ENCODE measurements at regions of chr10 and their contacts with region 1.

Region 1: GRCh38 chr10:5094265-5095205 is at the start of gene AKR1C3:
- DNase-seq: peak; percentile 22
- H3K4me3 Mint-ChIP-seq: peak within 1 kb of the TSS; percentile 78
- H3K27ac Mint-ChIP-seq: peak within 1 kb of the TSS; percentile 93
- H3K4me1 Mint-ChIP-seq: peaks cover 50% of the 10 kb centered on the region
- H3K27me3 Mint-ChIP-seq: no peaks in the 10 kb centered on the region
- CTCF ChIP-seq: peak; percentile 65
- total RNA-seq, gene AKR1C3: 177 and 181 TPM in 2 replicates

Region 2: DNA sequence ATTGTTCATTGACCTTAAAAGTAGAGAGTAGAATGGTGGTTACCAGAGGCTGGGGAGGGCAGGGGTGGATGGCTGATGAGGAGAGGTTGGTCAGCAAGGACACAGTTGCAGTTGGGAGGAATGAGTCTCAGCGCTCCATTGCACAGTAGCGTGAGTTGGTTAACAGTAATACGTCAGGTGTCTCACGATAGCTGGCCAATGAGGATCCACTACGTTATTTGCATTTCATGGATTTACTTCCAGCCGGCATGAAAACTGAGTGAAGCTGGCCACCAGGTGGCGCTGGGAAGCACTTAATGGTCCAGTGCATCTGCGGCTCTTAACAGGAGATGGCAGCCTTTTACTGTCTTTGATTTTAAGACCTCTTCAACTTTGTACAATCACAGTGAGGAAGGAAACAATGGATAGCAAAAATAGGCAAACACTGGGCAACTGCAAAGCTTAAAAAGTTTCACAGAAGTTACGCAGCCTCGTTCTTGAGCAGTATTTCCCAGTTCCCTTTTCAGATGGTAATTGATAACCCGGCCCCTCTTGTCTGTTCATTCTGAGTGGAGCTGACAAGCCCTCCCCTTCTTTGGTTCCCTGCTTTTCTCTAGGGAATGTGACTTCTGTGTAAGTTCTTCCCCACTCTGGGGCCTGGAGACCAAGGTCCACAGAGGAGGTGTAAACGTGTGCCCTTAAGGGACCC is 244.8 kb before region 1 on chr10:
- CTCF ChIA-PET with region 1: interaction called, 29 read pairs
- intact Hi-C with region 1: loop called (anchors 1 kb)
- DNase-seq: peak; percentile 94
- H3K4me3 Mint-ChIP-seq: no peak overlapping the region
- H3K27ac Mint-ChIP-seq: peak overlapping the region; percentile 72
- H3K4me1 Mint-ChIP-seq: peaks cover 61% of the 10 kb centered on the region
- H3K27me3 Mint-ChIP-seq: no peaks in the 10 kb centered on the region
- CTCF ChIP-seq: peak; percentile 98

Region 3: DNA sequence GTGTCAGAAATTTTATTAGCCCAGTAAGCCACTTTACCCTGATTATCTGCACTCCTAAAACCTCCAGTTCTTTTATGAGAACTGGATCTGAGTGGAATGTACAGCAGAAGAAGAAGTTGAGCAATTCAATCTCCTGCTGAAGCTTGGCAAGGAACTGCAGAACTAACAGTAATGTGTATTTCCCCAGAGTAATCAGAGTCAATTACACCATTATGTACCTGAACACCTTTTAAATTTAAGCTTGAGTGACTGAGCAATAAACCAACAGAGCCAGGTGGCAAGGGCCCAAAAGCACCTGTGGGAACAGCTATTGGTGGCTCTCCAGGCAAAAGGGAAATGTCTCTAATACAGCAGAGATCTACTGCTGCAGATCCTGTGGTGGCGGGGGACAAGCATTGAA is 50.8 kb before region 1 on chr10:
- CTCF ChIA-PET with region 1: no interaction called
- intact Hi-C with region 1: loop called (anchors 5 kb)
- DNase-seq: no peak
- H3K4me3 Mint-ChIP-seq: no peak overlapping the region
- H3K27ac Mint-ChIP-seq: no peak overlapping the region
- H3K4me1 Mint-ChIP-seq: peaks cover 32% of the 10 kb centered on the region
- H3K27me3 Mint-ChIP-seq: no peaks in the 10 kb centered on the region
- CTCF ChIP-seq: no peak

Region 4: DNA sequence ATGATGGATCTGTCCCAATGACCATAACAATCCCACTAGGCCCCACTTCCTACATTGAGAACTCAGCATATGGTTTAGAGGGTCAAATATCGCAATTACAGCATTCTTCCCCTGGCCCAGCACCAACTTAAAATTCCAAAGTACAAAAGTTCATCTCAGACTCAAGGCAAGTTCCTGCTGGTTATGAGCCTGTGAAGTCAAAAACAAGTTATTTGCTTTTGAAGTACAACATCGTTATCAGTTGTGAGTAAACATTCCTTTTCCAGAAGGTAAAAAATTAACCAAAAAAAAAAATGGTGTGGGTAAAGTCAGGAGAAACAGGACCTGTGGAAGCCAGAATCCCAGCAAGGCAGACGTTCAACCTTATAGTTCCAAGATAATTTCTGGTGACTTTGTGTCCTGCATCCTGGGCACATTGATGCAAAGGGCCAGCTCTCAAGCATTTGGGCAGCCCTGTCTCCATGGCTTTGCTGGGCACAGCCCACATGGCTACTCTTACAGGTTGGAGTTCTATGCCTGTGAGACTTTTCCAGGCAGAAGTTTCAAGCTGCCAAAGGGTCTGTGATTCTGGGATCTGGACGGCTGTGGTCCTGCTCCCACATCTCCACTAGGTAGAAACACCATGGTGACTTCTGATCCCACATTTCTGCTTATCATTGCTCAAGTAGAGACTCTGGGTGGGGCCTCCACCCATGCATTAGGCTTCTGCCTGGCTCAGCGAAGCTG is 52.9 kb after region 1 on chr10:
- CTCF ChIA-PET with region 1: interaction called, 3 read pairs
- intact Hi-C with region 1: loop called (anchors 2 kb)
- DNase-seq: peak; percentile 47
- H3K4me3 Mint-ChIP-seq: peak overlapping the region; percentile 44
- H3K27ac Mint-ChIP-seq: peak overlapping the region; percentile 85
- H3K4me1 Mint-ChIP-seq: peaks cover 39% of the 10 kb centered on the region
- H3K27me3 Mint-ChIP-seq: no peaks in the 10 kb centered on the region
- CTCF ChIP-seq: no peak

Region 5: GRCh38 chr10:5165738-5166137 is 71.2 kb after region 1 on chr10:
- CTCF ChIA-PET with region 1: no interaction called
- intact Hi-C with region 1: no loop called
- DNase-seq: no peak
- H3K4me3 Mint-ChIP-seq: no peak overlapping the region
- H3K27ac Mint-ChIP-seq: no peak overlapping the region
- H3K4me1 Mint-ChIP-seq: no peaks in the 10 kb centered on the region
- H3K27me3 Mint-ChIP-seq: no peaks in the 10 kb centered on the region
- CTCF ChIP-seq: no peak

Region 6: GRCh38 chr10:5216801-5217200 is 122.3 kb after region 1 on chr10:
- CTCF ChIA-PET with region 1: interaction called, 3 read pairs
- intact Hi-C with region 1: loop called (anchors 5 kb)
- DNase-seq: no peak
- H3K4me3 Mint-ChIP-seq: no peak overlapping the region
- H3K27ac Mint-ChIP-seq: no peak overlapping the region
- H3K4me1 Mint-ChIP-seq: peaks cover 18% of the 10 kb centered on the region
- H3K27me3 Mint-ChIP-seq: no peaks in the 10 kb centered on the region
- CTCF ChIP-seq: no peak

Region 7: GRCh38 chr10:5317547-5318107 is 223.1 kb after region 1 on chr10:
- CTCF ChIA-PET with region 1: no interaction called
- intact Hi-C with region 1: no loop called
- DNase-seq: peak; percentile 71
- H3K4me3 Mint-ChIP-seq: no peak overlapping the region
- H3K27ac Mint-ChIP-seq: peak overlapping the region; percentile 67
- H3K4me1 Mint-ChIP-seq: peaks cover 18% of the 10 kb centered on the region
- H3K27me3 Mint-ChIP-seq: no peaks in the 10 kb centered on the region
- CTCF ChIP-seq: no peak

Region 8: DNA sequence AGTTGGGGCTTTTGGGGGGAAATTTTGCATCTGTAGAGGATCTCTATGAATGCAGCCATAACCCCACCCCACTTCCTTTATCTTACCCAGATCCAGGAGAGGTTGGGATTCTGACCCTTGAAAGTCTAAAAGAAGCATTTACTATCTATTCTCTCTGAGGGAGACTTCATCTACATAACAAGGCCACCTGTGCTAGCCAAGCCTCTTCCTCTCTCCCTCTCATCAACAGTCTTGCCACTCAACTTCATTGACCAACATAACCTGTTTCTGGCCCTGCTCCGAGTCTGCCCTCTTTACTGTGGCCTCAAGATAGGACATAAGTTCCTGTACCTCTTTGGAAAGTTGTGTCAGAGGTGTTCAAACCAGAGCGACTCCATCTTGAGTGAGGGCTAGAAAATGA is 290.7 kb after region 1 on chr10:
- CTCF ChIA-PET with region 1: no interaction called
- intact Hi-C with region 1: loop called (anchors 10 kb)
- DNase-seq: no peak
- H3K4me3 Mint-ChIP-seq: no peak overlapping the region
- H3K27ac Mint-ChIP-seq: no peak overlapping the region
- H3K4me1 Mint-ChIP-seq: no peaks in the 10 kb centered on the region
- H3K27me3 Mint-ChIP-seq: no peaks in the 10 kb centered on the region
- CTCF ChIP-seq: no peak

Measured in Calu3 (cell line).